Right ventricle myocardium inferior (tissue), 1 donor: ENCODE measurements at regions of chr12 and their contacts with region 1.

Region 1: DNA sequence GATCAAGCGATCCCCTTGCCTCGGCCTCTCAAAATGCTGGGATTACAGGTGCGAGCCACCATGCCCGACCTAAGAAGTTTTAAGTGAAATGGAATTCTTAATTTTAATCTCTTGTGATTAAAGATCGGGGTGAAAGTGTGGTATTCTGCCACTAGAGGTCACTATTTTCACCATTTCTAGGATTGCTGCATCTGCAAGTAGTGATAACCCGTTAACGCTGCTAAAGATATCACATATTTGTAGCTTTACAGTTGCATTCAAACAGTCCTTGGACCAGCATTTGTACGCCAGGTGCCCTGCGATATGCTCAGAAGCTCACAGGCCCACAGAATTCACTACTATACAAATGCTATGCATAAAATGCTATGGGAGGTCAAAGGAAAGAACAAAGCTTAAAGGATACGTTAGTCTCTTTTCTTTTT is 19.3 kb downstream of the CCDC62 start:
- DNase-seq: no peak
- ATAC-seq: no peak

Region 2: DNA sequence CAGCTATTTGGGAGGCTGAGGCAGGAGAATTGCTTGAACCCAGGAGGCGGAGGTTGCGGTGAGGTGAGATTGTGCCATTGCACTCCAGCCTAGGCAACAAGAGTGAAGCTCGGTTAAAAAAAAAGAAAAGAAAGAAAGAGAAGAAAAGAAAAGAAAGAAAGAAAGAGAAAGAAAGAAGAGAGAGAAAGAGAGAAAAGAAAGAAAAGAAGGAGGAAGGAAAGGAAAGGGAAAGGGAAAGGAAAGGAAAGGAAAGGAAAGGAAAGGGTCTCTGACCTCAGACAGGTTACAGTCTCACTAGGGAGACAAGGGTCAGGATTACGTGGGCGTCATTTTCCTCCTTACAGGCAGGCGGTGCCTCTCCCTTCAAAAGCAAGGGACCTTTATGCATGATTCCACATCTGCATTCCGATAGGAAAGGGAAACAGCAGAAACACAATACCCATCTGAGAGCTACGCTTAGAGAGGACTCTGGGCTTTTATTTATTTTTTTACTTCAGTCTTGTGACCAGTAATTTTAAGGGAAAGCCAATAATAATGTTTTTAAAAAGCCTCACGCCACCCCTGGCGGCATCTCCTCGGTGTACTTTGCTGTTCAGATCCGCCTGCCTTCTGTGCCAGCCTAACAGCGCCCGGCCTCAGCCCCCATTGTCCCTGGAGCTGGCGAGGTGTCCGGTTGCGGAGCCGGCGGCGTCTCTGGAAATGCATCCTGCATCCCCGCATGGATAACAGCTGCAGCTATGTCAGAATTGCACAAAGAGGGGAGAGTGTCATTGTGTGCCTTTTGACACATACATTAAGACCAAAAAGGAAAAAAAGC is 40.6 kb after region 1 on chr12:
- intact Hi-C with region 1: loop called (anchors 5 kb)
- DNase-seq: no peak
- ATAC-seq: peak; percentile 40